Naive thymus-derived CD4-positive, alpha-beta T cell (primary cell): ENCODE measurements at regions of chr16 and their contacts with region 1.

Region 1: GRCh38 chr16:27367461-27368357 is 34.3 kb upstream of the IL21R start:
- DNase-seq: peak; percentile 64 to 98 (median 93)
- ATAC-seq: peak; percentile 89
- H3K4me3 ChIP-seq: peak overlapping the region; percentile 45
- H3K4me3 Mint-ChIP-seq: peak overlapping the region; percentile 54 to 86 (median 73)
- H3K27ac ChIP-seq: peak overlapping the region; percentile 99
- H3K27ac Mint-ChIP-seq: peak overlapping the region in 7 of 9 donors; percentile 93 to 100 (median 99)
- H3K4me1 ChIP-seq: peaks cover 26 to 62% of the 10 kb centered on the region in 2 donors
- H3K4me1 Mint-ChIP-seq: peaks cover 15 to 80% (median 73%) of the 10 kb centered on the region in 7 donors
- H3K27me3 ChIP-seq: no peaks in the 10 kb centered on the region
- H3K27me3 Mint-ChIP-seq: no peaks in the 10 kb centered on the region

Region 2: GRCh38 chr16:26598061-26598460 is 769.6 kb before region 1 on chr16:
- CTCF ChIA-PET with region 1: no interaction called
- POLR2A ChIA-PET with region 1: no interaction called
- intact Hi-C with region 1: loop called in 1 of 2 experiments (anchors 1 kb)
- DNase-seq: peak in 7 of 9 donors; percentile 7 to 72 (median 24)
- ATAC-seq: peak; percentile 86
- H3K4me3 ChIP-seq: no peak overlapping the region
- H3K4me3 Mint-ChIP-seq: peak overlapping the region in 1 of 10 donors; percentile 74
- H3K27ac ChIP-seq: no peak overlapping the region
- H3K27ac Mint-ChIP-seq: peak overlapping the region in 3 of 9 donors; percentile 15 to 96 (median 69)
- H3K4me1 ChIP-seq: peaks cover 0 to 20% of the 10 kb centered on the region in 2 donors
- H3K4me1 Mint-ChIP-seq: peaks cover 4 to 75% (median 9%) of the 10 kb centered on the region in 7 donors
- H3K27me3 ChIP-seq: no peaks in the 10 kb centered on the region
- H3K27me3 Mint-ChIP-seq: peaks cover 0 to 19% (median 0%) of the 10 kb centered on the region in 5 donors

Region 3: DNA sequence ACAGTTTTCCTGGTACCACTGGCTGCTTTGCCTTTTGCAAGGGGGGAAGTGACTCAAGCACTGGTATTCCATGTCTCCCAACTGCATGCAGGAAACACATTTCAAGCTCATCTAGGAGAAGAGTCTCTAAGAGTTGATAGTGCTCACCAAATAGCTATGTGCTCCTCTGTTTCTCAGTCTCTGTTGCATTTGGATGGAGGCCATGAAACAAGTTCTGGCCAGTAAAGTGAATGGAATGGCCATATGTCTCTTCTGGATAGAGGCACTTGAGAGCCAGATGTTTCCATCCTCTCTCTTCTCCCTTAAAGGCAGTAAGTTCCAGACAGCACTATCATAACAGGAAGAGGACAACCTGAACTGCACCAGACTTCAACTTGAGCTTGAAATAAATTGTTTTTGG is 240.4 kb before region 1 on chr16:
- CTCF ChIA-PET with region 1: no interaction called
- POLR2A ChIA-PET with region 1: no interaction called
- intact Hi-C with region 1: no loop called
- DNase-seq: no peak
- ATAC-seq: no peak
- H3K4me3 ChIP-seq: no peak overlapping the region
- H3K4me3 Mint-ChIP-seq: no peak overlapping the region
- H3K27ac ChIP-seq: no peak overlapping the region
- H3K27ac Mint-ChIP-seq: no peak overlapping the region
- H3K4me1 ChIP-seq: no peaks in the 10 kb centered on the region
- H3K4me1 Mint-ChIP-seq: no peaks in the 10 kb centered on the region
- H3K27me3 ChIP-seq: peaks cover 0 to 2% of the 10 kb centered on the region in 2 donors
- H3K27me3 Mint-ChIP-seq: peaks cover 0 to 4% (median 0%) of the 10 kb centered on the region in 5 donors

Region 4: DNA sequence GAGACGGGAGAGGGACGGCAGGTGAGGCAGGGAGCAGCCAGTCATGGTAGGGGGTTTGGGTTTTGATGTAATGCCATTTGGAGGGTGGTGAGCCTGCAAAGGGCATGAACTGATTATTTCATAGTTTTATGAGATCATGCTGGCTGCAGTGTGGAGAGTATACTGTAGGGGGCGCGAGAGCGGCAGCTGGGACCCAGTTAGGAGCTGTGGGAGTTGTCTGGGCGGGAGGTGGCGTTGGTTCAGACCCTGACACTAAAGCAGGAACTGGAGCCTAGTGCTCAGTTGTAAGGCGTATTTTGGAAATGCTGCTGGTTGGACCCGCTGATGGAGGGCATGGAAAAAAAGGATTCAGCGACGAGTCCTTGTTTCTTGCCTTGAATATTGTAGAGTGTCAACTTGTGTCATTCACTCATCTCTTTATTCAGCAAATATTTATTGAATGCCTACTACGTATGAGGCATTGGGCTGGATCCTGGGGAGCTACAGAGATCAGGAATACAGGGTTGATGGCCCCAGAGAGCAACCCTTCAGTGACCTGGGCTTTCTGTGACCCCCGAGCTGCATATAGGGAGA is 188.1 kb before region 1 on chr16:
- CTCF ChIA-PET with region 1: interaction called, 38 read pairs
- POLR2A ChIA-PET with region 1: interaction called, 14 read pairs
- intact Hi-C with region 1: loop called (anchors 1 kb)
- DNase-seq: peak; percentile 70 to 91 (median 84)
- ATAC-seq: peak; percentile 100
- H3K4me3 ChIP-seq: no peak overlapping the region
- H3K4me3 Mint-ChIP-seq: peak overlapping the region in 9 of 10 donors; percentile 5 to 56 (median 46)
- H3K27ac ChIP-seq: peak overlapping the region; percentile 19
- H3K27ac Mint-ChIP-seq: peak overlapping the region; percentile 51 to 95 (median 86)
- H3K4me1 ChIP-seq: peaks cover 17 to 34% of the 10 kb centered on the region in 2 donors
- H3K4me1 Mint-ChIP-seq: peaks cover 20 to 62% (median 48%) of the 10 kb centered on the region in 7 donors
- H3K27me3 ChIP-seq: no peaks in the 10 kb centered on the region
- H3K27me3 Mint-ChIP-seq: peaks cover 0 to 13% (median 0%) of the 10 kb centered on the region in 5 donors

Region 5: GRCh38 chr16:27203429-27204231 is 164.1 kb before region 1 on chr16 and contains the start of gene KDM8:
- CTCF ChIA-PET with region 1: interaction called, 6 read pairs
- POLR2A ChIA-PET with region 1: interaction called, 42 read pairs
- intact Hi-C with region 1: loop called (anchors 1 kb)
- DNase-seq: peak; percentile 96 to 100 (median 100)
- ATAC-seq: peak; percentile 88
- H3K4me3 ChIP-seq: peak within 1 kb of the TSS; percentile 97
- H3K4me3 Mint-ChIP-seq: peak within 1 kb of the TSS; percentile 91 to 100 (median 98)
- H3K27ac ChIP-seq: peak within 1 kb of the TSS; percentile 93
- H3K27ac Mint-ChIP-seq: peak within 1 kb of the TSS; percentile 94 to 100 (median 100)
- H3K4me1 ChIP-seq: peaks cover 40 to 50% of the 10 kb centered on the region in 2 donors
- H3K4me1 Mint-ChIP-seq: peaks cover 41 to 70% (median 60%) of the 10 kb centered on the region in 7 donors
- H3K27me3 ChIP-seq: no peaks in the 10 kb centered on the region
- H3K27me3 Mint-ChIP-seq: peaks cover 0 to 3% (median 0%) of the 10 kb centered on the region in 5 donors
- total RNA-seq, gene KDM8: 15.6 to 34.4 (median 19.0) TPM

Region 6: GRCh38 chr16:27318392-27319226 is 49.1 kb before region 1 on chr16:
- CTCF ChIA-PET with region 1: interaction called, 5 read pairs
- POLR2A ChIA-PET with region 1: interaction called, 19 read pairs
- intact Hi-C with region 1: loop called (anchors 1 kb)
- DNase-seq: peak; percentile 22 to 77 (median 52)
- ATAC-seq: peak; percentile 61
- H3K4me3 ChIP-seq: peak overlapping the region; percentile 63
- H3K4me3 Mint-ChIP-seq: peak overlapping the region; percentile 85 to 99 (median 97)
- H3K27ac ChIP-seq: peak overlapping the region; percentile 99
- H3K27ac Mint-ChIP-seq: peak overlapping the region; percentile 92 to 99 (median 95)
- H3K4me1 ChIP-seq: peaks cover 37 to 43% of the 10 kb centered on the region in 2 donors
- H3K4me1 Mint-ChIP-seq: peaks cover 67 to 85% (median 75%) of the 10 kb centered on the region in 7 donors
- H3K27me3 ChIP-seq: no peaks in the 10 kb centered on the region
- H3K27me3 Mint-ChIP-seq: no peaks in the 10 kb centered on the region

Region 7: GRCh38 chr16:27401768-27402568 is 34.3 kb after region 1 on chr16 and contains the start of gene IL21R:
- CTCF ChIA-PET with region 1: interaction called, 6 read pairs
- POLR2A ChIA-PET with region 1: interaction called, 63 read pairs
- intact Hi-C with region 1: loop called (anchors 1 to 2 kb)
- DNase-seq: peak; percentile 72 to 91 (median 87)
- ATAC-seq: peak; percentile 91
- H3K4me3 ChIP-seq: peak within 1 kb of the TSS; percentile 88
- H3K4me3 Mint-ChIP-seq: peak within 1 kb of the TSS; percentile 76 to 99 (median 98)
- H3K27ac ChIP-seq: peak within 1 kb of the TSS; percentile 91
- H3K27ac Mint-ChIP-seq: peak within 1 kb of the TSS; percentile 89 to 99 (median 98)
- H3K4me1 ChIP-seq: peaks cover 38 to 44% of the 10 kb centered on the region in 2 donors
- H3K4me1 Mint-ChIP-seq: peaks cover 23 to 75% (median 70%) of the 10 kb centered on the region in 7 donors
- H3K27me3 ChIP-seq: no peaks in the 10 kb centered on the region
- H3K27me3 Mint-ChIP-seq: no peaks in the 10 kb centered on the region
- total RNA-seq, gene IL21R: 24.6 to 40.9 (median 31.4) TPM

Region 8: GRCh38 chr16:27430923-27431484 is 63.3 kb after region 1 on chr16:
- CTCF ChIA-PET with region 1: no interaction called
- POLR2A ChIA-PET with region 1: no interaction called
- intact Hi-C with region 1: no loop called
- DNase-seq: peak in 1 of 9 donors; percentile 23
- ATAC-seq: no peak
- H3K4me3 ChIP-seq: no peak overlapping the region
- H3K4me3 Mint-ChIP-seq: peak overlapping the region in 1 of 10 donors; percentile 16
- H3K27ac ChIP-seq: no peak overlapping the region
- H3K27ac Mint-ChIP-seq: peak overlapping the region; percentile 14 to 90 (median 64)
- H3K4me1 ChIP-seq: peaks cover 13 to 24% of the 10 kb centered on the region in 2 donors
- H3K4me1 Mint-ChIP-seq: peaks cover 24 to 69% (median 54%) of the 10 kb centered on the region in 7 donors
- H3K27me3 ChIP-seq: no peaks in the 10 kb centered on the region
- H3K27me3 Mint-ChIP-seq: no peaks in the 10 kb centered on the region

Region 9: DNA sequence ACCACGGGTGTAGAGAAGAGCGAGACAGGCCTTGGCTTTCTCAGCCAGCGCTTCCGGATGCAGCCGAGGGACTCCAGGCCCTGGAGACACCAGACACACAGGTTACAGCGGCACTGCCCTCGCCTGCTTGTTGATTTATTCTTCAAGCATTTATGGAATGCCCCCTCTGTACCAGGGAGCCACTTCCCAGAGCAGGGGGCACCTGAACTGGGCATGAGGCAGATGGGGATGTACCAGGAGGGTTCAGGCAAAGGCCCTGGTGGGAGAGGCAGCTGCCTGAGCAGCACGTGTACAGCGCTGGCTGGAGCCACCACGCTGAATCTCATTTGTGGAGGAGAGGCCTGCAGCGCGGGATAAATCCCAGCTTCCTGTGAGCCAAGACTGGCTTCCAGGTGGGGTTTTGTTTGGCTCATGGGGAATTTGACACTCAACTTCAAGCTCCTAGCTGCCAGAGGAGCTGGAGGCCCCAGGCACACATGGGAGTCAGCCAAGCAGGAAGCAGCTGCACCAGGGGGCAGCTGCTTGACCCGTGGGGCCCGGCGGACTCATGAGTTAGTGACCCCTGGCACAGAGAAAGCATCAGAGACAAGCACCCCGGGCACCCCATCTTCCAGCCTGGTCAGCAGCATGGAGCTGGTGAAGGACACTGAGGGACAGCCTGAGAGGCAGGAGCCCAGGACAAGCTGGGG is 93.9 kb after region 1 on chr16:
- CTCF ChIA-PET with region 1: interaction called, 11 read pairs
- POLR2A ChIA-PET with region 1: interaction called, 3 read pairs
- intact Hi-C with region 1: loop called (anchors 1 to 2 kb)
- DNase-seq: no peak
- ATAC-seq: no peak
- H3K4me3 ChIP-seq: no peak overlapping the region
- H3K4me3 Mint-ChIP-seq: no peak overlapping the region
- H3K27ac ChIP-seq: no peak overlapping the region
- H3K27ac Mint-ChIP-seq: peak overlapping the region in 8 of 9 donors; percentile 16 to 64 (median 44)
- H3K4me1 ChIP-seq: peaks cover 40 to 60% of the 10 kb centered on the region in 2 donors
- H3K4me1 Mint-ChIP-seq: peaks cover 24 to 75% (median 39%) of the 10 kb centered on the region in 7 donors
- H3K27me3 ChIP-seq: no peaks in the 10 kb centered on the region
- H3K27me3 Mint-ChIP-seq: no peaks in the 10 kb centered on the region